AG04450 (cell line): ENCODE measurements at regions of chr13 and their contacts with region 1.

Region 1: GRCh38 chr13:23899555-23899954 is 2.3 kb upstream of the C1QTNF9B start:
- DNase-seq: peak; percentile 61
- H3K4me3 ChIP-seq: no peak overlapping the region
- H3K27ac ChIP-seq: no peak overlapping the region
- H3K27me3 ChIP-seq: no peaks in the 10 kb centered on the region
- CTCF ChIP-seq: peak; percentile 62

Region 2: DNA sequence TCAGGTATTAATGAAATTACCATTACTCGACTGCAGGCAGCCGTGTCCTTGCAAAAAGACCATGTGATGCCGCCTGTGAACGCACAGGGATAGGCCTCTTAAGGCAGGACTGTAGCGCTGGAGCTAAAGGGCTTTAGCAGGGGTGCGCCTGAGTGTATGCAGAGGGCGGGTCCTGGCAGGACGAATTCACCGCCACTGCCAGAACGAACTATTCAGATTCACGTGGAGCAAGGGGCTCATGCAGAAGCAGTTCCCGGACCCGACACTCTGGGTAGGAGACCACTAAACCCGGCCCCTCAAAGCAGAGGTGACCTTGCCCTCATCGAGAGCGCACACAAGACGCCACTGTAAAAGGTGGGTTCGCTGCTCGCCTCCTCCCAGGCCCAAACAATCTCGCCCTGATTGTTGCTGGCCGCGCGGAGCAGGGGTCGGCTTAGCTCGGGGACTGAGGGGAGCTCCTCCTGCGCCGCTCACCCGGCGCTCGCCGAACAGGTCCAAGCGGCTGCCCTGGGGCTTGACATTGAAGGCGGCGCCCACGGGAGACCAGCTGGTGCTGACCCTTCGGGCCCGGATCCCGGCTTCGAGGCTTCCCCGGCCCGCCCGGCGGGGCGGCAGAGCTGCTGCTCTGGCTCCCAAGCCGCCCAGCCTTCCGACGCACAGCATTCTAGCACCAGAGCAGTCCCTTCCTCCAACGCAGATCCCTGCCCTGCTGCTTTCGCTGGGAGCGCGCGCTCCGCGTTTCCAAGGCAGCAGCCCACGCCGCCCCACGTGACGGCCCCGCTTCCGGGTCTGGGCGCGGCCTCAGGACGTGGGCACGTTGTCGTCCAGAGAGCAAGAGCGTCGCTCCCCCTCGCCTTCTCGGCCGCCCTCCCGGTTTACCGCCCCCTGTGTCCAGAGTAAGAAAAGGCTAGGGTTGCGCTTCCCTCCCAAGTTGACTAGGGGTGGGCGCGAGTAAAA is 10.6 kb before region 1 on chr13 and contains the start of gene MIPEP:
- CTCF ChIA-PET with region 1: interaction called, 20 read pairs
- POLR2A ChIA-PET with region 1: interaction called, 13 read pairs
- DNase-seq: peak; percentile 87
- H3K4me3 ChIP-seq: peak within 1 kb of the TSS; percentile 88
- H3K27ac ChIP-seq: peak within 1 kb of the TSS; percentile 87
- H3K27me3 ChIP-seq: no peaks in the 10 kb centered on the region
- CTCF ChIP-seq: peak; percentile 74
- polyA plus RNA-seq, gene MIPEP: 37.0 and 40.8 TPM in 2 replicates